ENCODE measurements at regions of chr7 and their contacts with region 1.

Region 1: GRCh38 chr7:23273141-23273599 is 26.0 kb upstream of the MALSU1 start:
- DNase-seq: peak; percentile 81 to 91 (median 86)
- H3K4me3 ChIP-seq: no peak overlapping the region
- H3K27ac ChIP-seq: no peak overlapping the region
- H3K4me1 ChIP-seq: no peaks in the 10 kb centered on the region
- H3K27me3 ChIP-seq: no peaks in the 10 kb centered on the region
- CTCF ChIP-seq: peak; percentile 46 to 61 (median 46)
- EP300 ChIP-seq: no peak
- POLR2A ChIP-seq: no peak

Region 2: DNA sequence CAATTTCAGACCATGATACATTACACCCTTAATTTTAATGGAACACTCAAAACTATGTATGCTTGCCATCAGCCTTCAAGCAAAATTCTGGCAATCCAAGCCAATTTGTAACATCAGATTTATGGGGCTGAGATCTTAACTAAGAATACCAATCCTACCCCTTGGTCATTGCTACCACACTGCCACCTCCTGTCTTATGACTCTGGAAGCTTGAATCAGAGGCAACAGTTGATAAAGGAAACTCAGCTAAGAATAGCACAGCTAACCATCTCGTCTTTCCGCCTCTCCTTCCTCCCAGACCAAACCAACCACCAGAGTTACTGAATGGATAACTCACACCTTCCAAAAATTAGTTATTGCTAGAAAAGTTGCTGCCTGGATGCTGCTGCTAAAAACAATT is 189.7 kb after region 1 on chr7:
- intact Hi-C with region 1: loop called in 1 of 4 experiments (anchors 5 kb)
- DNase-seq: no peak
- H3K4me3 ChIP-seq: no peak overlapping the region
- H3K27ac ChIP-seq: no peak overlapping the region
- H3K4me1 ChIP-seq: peaks cover 1% of the 10 kb centered on the region
- H3K27me3 ChIP-seq: no peaks in the 10 kb centered on the region
- CTCF ChIP-seq: no peak
- EP300 ChIP-seq: no peak
- POLR2A ChIP-seq: no peak